Left ventricle myocardium superior (tissue), 1 donor: ENCODE measurements at regions of chr3 and their contacts with region 1.

Region 1: DNA sequence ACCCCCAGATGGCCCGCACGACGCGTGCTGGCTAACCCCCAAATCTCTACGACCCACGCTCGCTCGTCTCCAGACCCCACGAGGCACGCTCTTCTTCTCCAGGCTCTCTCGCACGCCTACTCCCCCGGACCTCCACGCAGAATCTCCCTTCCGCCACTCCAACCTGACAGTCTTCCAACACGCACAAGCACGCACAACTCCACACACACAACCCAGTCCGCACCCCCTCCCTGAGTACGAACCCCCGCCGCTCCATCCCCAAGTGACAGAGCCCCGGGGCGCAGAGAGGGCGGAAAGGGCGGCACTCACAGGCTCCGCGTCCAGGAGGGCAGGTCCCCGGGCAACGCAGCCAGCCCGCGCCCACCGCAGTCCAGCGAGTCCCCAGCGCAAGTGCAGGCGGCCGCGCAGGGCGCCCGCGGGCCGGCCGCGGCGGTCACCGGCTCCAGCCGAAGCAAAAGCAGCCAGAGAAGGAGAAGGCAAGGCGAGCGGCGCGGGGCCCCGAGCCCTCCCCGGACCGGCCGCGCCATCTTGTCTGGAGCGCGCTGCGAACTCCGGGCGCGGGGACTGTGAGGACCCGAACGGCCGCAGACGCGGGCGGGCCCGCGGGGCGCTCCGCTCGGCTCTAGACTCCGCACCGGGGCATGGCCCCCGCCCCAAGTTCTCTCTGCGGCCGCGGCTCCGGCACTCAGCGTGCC is 794 bp downstream of the LRIG1 start:
- DNase-seq: peak; percentile 61
- ATAC-seq: peak; percentile 4

Region 2: DNA sequence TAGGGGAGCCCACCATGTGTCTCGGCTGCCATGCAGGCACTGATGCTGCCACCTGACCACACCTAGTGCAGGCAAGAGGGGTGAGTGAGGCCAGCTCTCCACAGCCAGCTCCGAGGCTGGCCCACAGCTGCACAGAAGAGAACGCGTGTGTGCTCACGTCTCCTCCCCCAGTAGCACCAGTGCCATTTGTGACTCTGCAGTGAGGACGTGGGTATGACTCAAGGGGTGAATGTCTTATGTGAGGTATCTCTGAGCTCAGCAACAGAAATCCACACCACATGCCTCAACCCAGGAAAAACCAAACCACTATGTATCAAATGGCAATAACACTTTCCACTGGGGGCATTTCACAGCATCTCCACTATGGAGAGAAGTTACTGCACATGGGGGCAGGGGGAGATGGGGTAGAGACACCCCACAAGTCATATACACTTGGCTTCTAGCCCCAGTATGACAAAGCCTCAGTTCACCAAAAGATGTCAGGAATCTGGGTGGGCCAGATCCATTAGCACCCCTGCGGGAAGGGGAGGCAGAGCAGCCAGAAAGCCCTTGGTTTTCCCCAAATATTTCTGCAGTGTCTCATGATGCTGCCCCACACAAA is 86.8 kb before region 1 on chr3:
- intact Hi-C with region 1: loop called (anchors 5 kb)
- DNase-seq: no peak
- ATAC-seq: no peak

Region 3: GRCh38 chr3:66450390-66451022 is 49.5 kb before region 1 on chr3:
- intact Hi-C with region 1: loop called (anchors 2 kb)
- DNase-seq: peak; percentile 69
- ATAC-seq: peak; percentile 59